ENCODE measurements at regions of chr22 and their contacts with region 1.

Region 1: GRCh38 chr22:49852898-49853894 is at the start of gene ZBED4:
- DNase-seq: peak; percentile 98
- H3K4me3 ChIP-seq: peak within 1 kb of the TSS; percentile 81
- H3K27ac ChIP-seq: peak within 1 kb of the TSS; percentile 99
- H3K4me1 ChIP-seq: peaks cover 4% of the 10 kb centered on the region
- H3K27me3 ChIP-seq: peaks cover 23% of the 10 kb centered on the region
- CTCF ChIP-seq: no peak
- total RNA-seq, gene ZBED4: 16.2 to 19.9 TPM

Region 2: DNA sequence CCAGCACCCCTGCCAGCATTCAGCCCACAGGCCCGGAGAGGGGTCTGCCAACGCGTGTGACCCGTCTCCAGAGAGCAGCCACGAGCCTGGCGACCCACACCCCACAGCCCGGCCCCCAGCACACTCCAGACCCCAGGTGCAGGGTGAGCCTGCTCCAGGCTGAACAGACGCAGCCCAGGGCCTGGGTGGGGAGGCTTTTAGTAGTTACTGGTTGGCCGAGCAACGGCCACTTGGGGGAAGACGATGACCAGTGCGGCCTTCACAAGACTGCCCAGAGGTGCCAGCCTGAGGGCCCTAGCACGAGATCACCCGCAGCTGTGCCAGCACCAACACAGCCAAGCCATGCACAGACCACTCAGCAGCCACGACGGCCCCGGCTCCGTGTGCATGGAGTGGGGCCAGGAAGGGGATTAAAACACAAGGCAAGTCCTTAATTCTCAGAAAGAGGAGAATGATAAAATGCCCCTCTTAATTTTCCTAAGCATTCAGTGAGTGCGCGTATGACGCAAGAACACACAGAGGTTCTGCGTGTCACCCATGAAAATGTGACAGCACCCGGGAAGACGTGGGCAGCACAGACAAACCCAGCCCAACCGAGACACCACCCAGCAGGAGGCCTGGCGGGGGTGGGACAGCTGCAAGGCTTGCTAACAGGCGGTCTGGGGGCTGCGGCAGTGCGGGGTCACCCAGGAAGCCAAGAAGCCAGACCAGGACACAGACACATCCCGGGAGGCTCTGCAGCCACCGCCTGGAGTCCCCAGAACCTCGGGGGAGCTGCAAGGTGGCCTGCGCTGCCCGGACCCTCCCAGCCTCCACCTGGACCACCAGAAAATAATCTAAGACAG is 73.1 kb before region 1 on chr22:
- intact Hi-C with region 1: no loop called
- DNase-seq: no peak
- H3K4me3 ChIP-seq: no peak overlapping the region
- H3K27ac ChIP-seq: no peak overlapping the region
- H3K4me1 ChIP-seq: no peaks in the 10 kb centered on the region
- H3K27me3 ChIP-seq: no peaks in the 10 kb centered on the region
- CTCF ChIP-seq: no peak

Region 3: GRCh38 chr22:49827853-49828598 is 25.2 kb before region 1 on chr22 and contains the start of gene BRD1:
- intact Hi-C with region 1: loop called (anchors 2 kb)
- DNase-seq: peak; percentile 52
- H3K4me3 ChIP-seq: peak within 1 kb of the TSS; percentile 85
- H3K27ac ChIP-seq: peak within 1 kb of the TSS; percentile 61
- H3K4me1 ChIP-seq: peaks cover 12% of the 10 kb centered on the region
- H3K27me3 ChIP-seq: no peaks in the 10 kb centered on the region
- CTCF ChIP-seq: no peak
- total RNA-seq, gene BRD1: 32.7 to 37.7 TPM

Measured in colonic mucosa (tissue), 4 donors.